ENCODE measurements at regions of chr11 and their contacts with region 1.

Region 1: DNA sequence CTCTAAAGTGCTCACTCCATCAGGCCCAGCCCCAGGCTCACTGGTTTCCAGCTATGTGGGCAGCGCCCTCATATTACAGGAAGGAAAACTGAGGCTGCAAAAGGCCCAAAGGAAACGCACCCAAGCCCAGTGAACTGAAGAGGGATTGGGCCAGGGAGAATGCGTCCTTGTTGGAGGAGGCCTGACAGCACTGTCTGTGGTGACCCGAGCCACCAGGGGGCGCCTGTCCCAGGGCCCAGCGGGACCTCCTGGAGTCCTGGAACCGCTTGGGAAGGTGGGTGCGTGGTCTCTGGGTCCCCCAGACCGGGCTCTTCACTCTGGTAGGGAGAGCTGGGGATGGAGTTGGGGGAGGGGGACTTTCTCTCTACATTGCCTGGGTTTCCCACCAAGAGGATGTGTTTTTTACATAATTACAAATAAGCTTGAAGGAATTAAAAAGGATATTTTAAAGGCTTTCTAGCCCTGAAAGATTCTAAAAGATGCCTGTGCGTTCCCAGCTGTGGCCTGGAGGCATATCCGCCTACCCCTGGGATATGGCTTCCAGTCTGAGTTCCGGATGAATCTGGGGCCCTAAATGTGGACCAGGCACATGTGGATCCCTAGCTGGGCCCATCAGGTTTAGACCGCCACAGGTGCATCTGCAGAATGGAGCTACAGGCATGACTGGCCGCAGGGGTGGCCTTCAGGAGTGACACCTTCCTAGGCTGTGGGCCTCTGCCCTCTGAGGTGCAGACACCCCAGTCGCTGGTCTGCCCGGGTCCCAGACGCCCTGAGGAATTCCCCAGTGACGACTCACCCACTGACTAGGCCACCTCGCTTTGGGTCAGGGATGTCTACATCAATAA is 4.2 kb downstream of the SPI1 start:
- DNase-seq: peak; percentile 82 to 91
- ATAC-seq: peak; percentile 78 to 91 (median 88)
- H3K4me3 ChIP-seq: no peak overlapping the region
- H3K4me3 Mint-ChIP-seq: no peak overlapping the region
- H3K27ac ChIP-seq: no peak overlapping the region
- H3K27ac Mint-ChIP-seq: peak overlapping the region in 1 of 2 donors; percentile 31
- H3K4me1 ChIP-seq: peaks cover 39% of the 10 kb centered on the region
- H3K4me1 Mint-ChIP-seq: peaks cover 0 to 5% of the 10 kb centered on the region in 2 donors
- H3K27me3 ChIP-seq: no peaks in the 10 kb centered on the region
- H3K27me3 Mint-ChIP-seq: no peaks in the 10 kb centered on the region
- CTCF ChIP-seq: peak; percentile 96

Region 2: GRCh38 chr11:47454180-47454644 is 80.1 kb after region 1 on chr11:
- intact Hi-C with region 1: loop called (anchors 1 kb)
- DNase-seq: peak; percentile 33 to 86
- ATAC-seq: peak; percentile 92 to 99 (median 98)
- H3K4me3 ChIP-seq: no peak overlapping the region
- H3K4me3 Mint-ChIP-seq: no peak overlapping the region
- H3K27ac ChIP-seq: no peak overlapping the region
- H3K27ac Mint-ChIP-seq: no peak overlapping the region
- H3K4me1 ChIP-seq: peaks cover 4% of the 10 kb centered on the region
- H3K4me1 Mint-ChIP-seq: peaks cover 5% of the 10 kb centered on the region in 2 donors
- H3K27me3 ChIP-seq: no peaks in the 10 kb centered on the region
- H3K27me3 Mint-ChIP-seq: no peaks in the 10 kb centered on the region
- CTCF ChIP-seq: peak; percentile 69